Mammary epithelial cell (primary cell): ENCODE measurements at regions of chr1 and their contacts with region 1.

Region 1: DNA sequence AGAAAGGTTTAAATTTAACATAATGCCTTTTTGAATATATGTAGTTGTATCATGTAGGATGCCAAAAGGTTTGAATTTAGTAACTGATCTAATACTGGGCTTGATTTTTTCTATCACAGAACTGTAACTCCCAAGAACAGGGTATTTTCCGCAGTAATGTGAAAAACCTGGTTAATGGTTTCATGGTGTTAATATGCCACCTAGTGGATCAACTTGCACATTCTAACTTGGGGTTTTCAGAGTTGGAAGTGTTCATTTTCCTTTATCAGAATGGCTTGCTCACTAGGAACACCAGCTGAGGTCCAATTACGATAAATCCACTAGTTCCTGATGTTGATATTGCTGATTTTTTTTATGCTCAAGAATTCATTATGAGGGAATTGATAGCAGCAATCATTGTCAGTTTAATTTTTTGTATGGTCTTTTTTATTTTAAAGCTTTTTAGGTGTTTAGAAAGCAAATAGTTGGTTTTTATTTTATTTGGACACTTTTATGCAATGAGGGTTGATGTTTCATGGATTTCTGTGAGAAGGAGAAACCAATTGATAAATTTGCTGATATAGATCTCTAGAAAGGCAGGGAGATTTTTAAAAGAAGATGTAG is 157.2 kb downstream of the PLA2G4A start:
- DNase-seq: peak; percentile 40
- H3K4me3 ChIP-seq: no peak overlapping the region
- H3K27ac ChIP-seq: no peak overlapping the region
- H3K4me1 ChIP-seq: no peaks in the 10 kb centered on the region
- H3K27me3 ChIP-seq: no peaks in the 10 kb centered on the region
- CTCF ChIP-seq: peak; percentile 56 to 73

Region 2: GRCh38 chr1:186404454-186405051 is 581.4 kb before region 1 on chr1:
- CTCF ChIA-PET with region 1: no interaction called
- dilution Hi-C with region 1: no loop called
- in situ Hi-C with region 1: no loop called
- intact Hi-C with region 1: loop called (anchors 5 kb)
- DNase-seq: peak; percentile 32
- H3K4me3 ChIP-seq: no peak overlapping the region
- H3K27ac ChIP-seq: no peak overlapping the region
- H3K4me1 ChIP-seq: no peaks in the 10 kb centered on the region
- H3K27me3 ChIP-seq: no peaks in the 10 kb centered on the region
- CTCF ChIP-seq: peak; percentile 62 to 83

Region 3: DNA sequence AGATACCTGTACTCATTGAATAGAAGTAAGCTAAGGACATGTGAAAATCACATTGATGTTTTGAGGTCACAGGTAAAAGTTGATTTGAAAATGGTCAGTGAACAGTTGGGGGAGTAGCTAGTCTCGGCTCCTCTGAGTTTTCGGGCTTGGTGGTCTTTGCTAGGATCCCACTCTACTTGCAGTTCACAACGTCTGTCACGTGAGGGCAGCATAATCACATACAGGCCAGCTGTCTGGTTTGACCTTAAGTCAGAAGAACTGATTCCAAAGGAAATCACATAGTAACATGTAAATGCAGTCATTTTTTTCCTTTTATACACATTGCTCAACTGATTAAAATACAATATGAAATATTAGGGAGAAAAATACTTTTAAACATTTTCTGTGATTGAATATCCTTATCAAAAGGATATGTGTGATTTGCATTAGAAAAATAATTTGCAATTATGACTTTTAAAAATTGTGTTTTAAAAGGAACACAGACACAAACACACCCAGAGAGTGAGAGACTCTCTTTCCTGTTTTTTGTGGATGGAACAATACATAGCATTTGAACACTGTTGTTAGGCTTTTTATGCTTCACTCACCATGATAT is 503.2 kb before region 1 on chr1:
- CTCF ChIA-PET with region 1: no interaction called
- dilution Hi-C with region 1: no loop called
- in situ Hi-C with region 1: loop called (anchors 10 to 25 kb)
- intact Hi-C with region 1: loop called (anchors 1 kb)
- DNase-seq: peak; percentile 53
- H3K4me3 ChIP-seq: no peak overlapping the region
- H3K27ac ChIP-seq: no peak overlapping the region
- H3K4me1 ChIP-seq: no peaks in the 10 kb centered on the region
- H3K27me3 ChIP-seq: no peaks in the 10 kb centered on the region
- CTCF ChIP-seq: peak; percentile 98

Region 4: GRCh38 chr1:186722711-186723309 is 263.2 kb before region 1 on chr1:
- CTCF ChIA-PET with region 1: no interaction called
- dilution Hi-C with region 1: no loop called
- in situ Hi-C with region 1: loop called in 1 of 2 experiments (anchors 25 kb)
- intact Hi-C with region 1: loop called (anchors 1 kb)
- DNase-seq: peak; percentile 21
- H3K4me3 ChIP-seq: no peak overlapping the region
- H3K27ac ChIP-seq: no peak overlapping the region
- H3K4me1 ChIP-seq: no peaks in the 10 kb centered on the region
- H3K27me3 ChIP-seq: no peaks in the 10 kb centered on the region
- CTCF ChIP-seq: peak; percentile 75 to 86

Region 5: GRCh38 chr1:186806477-186806876 is 179.5 kb before region 1 on chr1:
- CTCF ChIA-PET with region 1: no interaction called
- dilution Hi-C with region 1: no loop called
- in situ Hi-C with region 1: no loop called
- intact Hi-C with region 1: loop called (anchors 5 kb)
- DNase-seq: peak; percentile 27
- H3K4me3 ChIP-seq: no peak overlapping the region
- H3K27ac ChIP-seq: no peak overlapping the region
- H3K4me1 ChIP-seq: no peaks in the 10 kb centered on the region
- H3K27me3 ChIP-seq: no peaks in the 10 kb centered on the region
- CTCF ChIP-seq: peak; percentile 35 to 59

Region 6: DNA sequence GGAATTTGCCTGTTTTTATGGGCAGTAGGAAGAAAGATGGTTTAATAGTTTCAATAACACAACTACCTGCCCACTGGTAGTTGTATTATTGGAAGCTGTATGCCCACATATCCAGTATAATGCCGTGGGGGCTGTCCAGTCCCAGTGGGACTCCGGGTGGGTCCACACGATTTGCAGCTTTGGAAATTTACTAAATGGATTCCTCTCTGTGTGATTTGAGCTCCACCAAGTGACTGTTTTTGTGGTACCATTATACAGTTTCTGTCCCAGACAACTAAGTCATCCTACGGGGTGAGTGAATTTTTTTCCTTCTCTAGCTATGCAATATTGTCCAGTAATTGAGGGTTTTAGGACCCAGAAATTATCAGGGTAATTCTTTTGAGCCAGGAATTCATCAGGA is 70.4 kb before region 1 on chr1:
- CTCF ChIA-PET with region 1: interaction called, 3 read pairs
- dilution Hi-C with region 1: loop called (anchors 5 kb)
- in situ Hi-C with region 1: loop called in 1 of 2 experiments (anchors 10 kb)
- intact Hi-C with region 1: loop called (anchors 1 kb)
- DNase-seq: no peak
- H3K4me3 ChIP-seq: no peak overlapping the region
- H3K27ac ChIP-seq: no peak overlapping the region
- H3K4me1 ChIP-seq: no peaks in the 10 kb centered on the region
- H3K27me3 ChIP-seq: no peaks in the 10 kb centered on the region
- CTCF ChIP-seq: peak in 1 of 2 donors; percentile 30

Region 7: GRCh38 chr1:186925881-186926669 is 59.9 kb before region 1 on chr1:
- CTCF ChIA-PET with region 1: no interaction called
- dilution Hi-C with region 1: no loop called
- in situ Hi-C with region 1: loop called in 1 of 2 experiments (anchors 10 kb)
- intact Hi-C with region 1: no loop called
- DNase-seq: no peak
- H3K4me3 ChIP-seq: no peak overlapping the region
- H3K27ac ChIP-seq: no peak overlapping the region
- H3K4me1 ChIP-seq: peaks cover 9% of the 10 kb centered on the region
- H3K27me3 ChIP-seq: no peaks in the 10 kb centered on the region
- CTCF ChIP-seq: no peak

Region 8: GRCh38 chr1:186937016-186937670 is 48.8 kb before region 1 on chr1:
- CTCF ChIA-PET with region 1: no interaction called
- dilution Hi-C with region 1: no loop called
- in situ Hi-C with region 1: no loop called
- intact Hi-C with region 1: no loop called
- DNase-seq: no peak
- H3K4me3 ChIP-seq: no peak overlapping the region
- H3K27ac ChIP-seq: no peak overlapping the region
- H3K4me1 ChIP-seq: no peaks in the 10 kb centered on the region
- H3K27me3 ChIP-seq: no peaks in the 10 kb centered on the region
- CTCF ChIP-seq: no peak

Region 9: GRCh38 chr1:187070076-187070475 is 84.1 kb after region 1 on chr1:
- CTCF ChIA-PET with region 1: no interaction called
- dilution Hi-C with region 1: no loop called
- in situ Hi-C with region 1: no loop called
- intact Hi-C with region 1: no loop called
- DNase-seq: peak; percentile 40
- H3K4me3 ChIP-seq: no peak overlapping the region
- H3K27ac ChIP-seq: no peak overlapping the region
- H3K4me1 ChIP-seq: no peaks in the 10 kb centered on the region
- H3K27me3 ChIP-seq: no peaks in the 10 kb centered on the region
- CTCF ChIP-seq: no peak